Activated naive CD4-positive, alpha-beta T cell treated with anti-CD3 and anti-CD28 coated beads for 36 hours (primary cell): ENCODE measurements at regions of chr13 and their contacts with region 1.

Region 1: DNA sequence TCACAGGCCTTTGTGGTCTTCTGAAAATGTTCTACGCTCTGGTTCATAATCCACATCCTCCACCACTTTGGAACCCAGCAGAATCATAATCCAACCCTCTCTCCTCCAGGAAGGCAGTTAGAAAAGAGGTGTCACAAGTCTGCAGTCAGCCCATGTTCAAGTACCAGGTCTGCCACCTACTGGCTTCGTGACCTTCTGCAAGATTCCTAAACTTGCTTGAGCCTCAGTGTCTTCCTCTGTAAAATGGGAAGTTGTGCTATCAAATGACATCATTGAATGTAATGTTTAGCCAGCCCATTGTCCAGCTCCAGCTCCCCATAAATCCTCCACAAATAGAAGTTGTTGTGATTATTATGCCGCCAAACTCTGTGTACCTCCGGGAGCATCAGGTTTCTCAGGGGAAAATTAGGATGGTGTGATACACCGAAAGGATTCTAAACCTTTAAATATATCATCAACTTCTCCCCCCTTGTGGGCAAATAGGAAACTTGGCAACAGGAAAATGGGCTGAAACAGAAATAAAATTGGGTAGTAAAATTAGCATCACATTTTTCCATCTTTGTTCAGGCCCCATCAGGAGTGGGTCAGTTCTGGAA is 109.7 kb downstream of the NUFIP1 start:
- DNase-seq: peak; percentile 49
- H3K4me3 Mint-ChIP-seq: no peak overlapping the region
- H3K27ac Mint-ChIP-seq: no peak overlapping the region
- H3K4me1 Mint-ChIP-seq: no peaks in the 10 kb centered on the region
- H3K27me3 Mint-ChIP-seq: peaks cover 3% of the 10 kb centered on the region

Region 2: GRCh38 chr13:44591316-44591715 is 288.2 kb before region 1 on chr13:
- CTCF ChIA-PET with region 1: no interaction called
- intact Hi-C with region 1: no loop called
- DNase-seq: no peak
- H3K4me3 Mint-ChIP-seq: no peak overlapping the region
- H3K27ac Mint-ChIP-seq: no peak overlapping the region
- H3K4me1 Mint-ChIP-seq: no peaks in the 10 kb centered on the region
- H3K27me3 Mint-ChIP-seq: peaks cover 19% of the 10 kb centered on the region

Region 3: GRCh38 chr13:44768239-44768638 is 111.3 kb before region 1 on chr13:
- CTCF ChIA-PET with region 1: no interaction called
- intact Hi-C with region 1: loop called (anchors 5 kb)
- DNase-seq: peak; percentile 72
- H3K4me3 Mint-ChIP-seq: no peak overlapping the region
- H3K27ac Mint-ChIP-seq: peak overlapping the region; percentile 85
- H3K4me1 Mint-ChIP-seq: peaks cover 27% of the 10 kb centered on the region
- H3K27me3 Mint-ChIP-seq: no peaks in the 10 kb centered on the region

Region 4: GRCh38 chr13:44786756-44787155 is 92.8 kb before region 1 on chr13:
- CTCF ChIA-PET with region 1: no interaction called
- intact Hi-C with region 1: no loop called
- DNase-seq: no peak
- H3K4me3 Mint-ChIP-seq: no peak overlapping the region
- H3K27ac Mint-ChIP-seq: no peak overlapping the region
- H3K4me1 Mint-ChIP-seq: no peaks in the 10 kb centered on the region
- H3K27me3 Mint-ChIP-seq: no peaks in the 10 kb centered on the region

Region 5: GRCh38 chr13:44951184-44951583 is 71.6 kb after region 1 on chr13:
- CTCF ChIA-PET with region 1: no interaction called
- intact Hi-C with region 1: no loop called
- DNase-seq: no peak
- H3K4me3 Mint-ChIP-seq: no peak overlapping the region
- H3K27ac Mint-ChIP-seq: no peak overlapping the region
- H3K4me1 Mint-ChIP-seq: no peaks in the 10 kb centered on the region
- H3K27me3 Mint-ChIP-seq: no peaks in the 10 kb centered on the region

Region 6: GRCh38 chr13:45004096-45004495 is 124.5 kb after region 1 on chr13:
- CTCF ChIA-PET with region 1: no interaction called
- intact Hi-C with region 1: no loop called
- DNase-seq: no peak
- H3K4me3 Mint-ChIP-seq: no peak overlapping the region
- H3K27ac Mint-ChIP-seq: no peak overlapping the region
- H3K4me1 Mint-ChIP-seq: no peaks in the 10 kb centered on the region
- H3K27me3 Mint-ChIP-seq: no peaks in the 10 kb centered on the region